Esophagus muscularis mucosa (tissue), 4 donors: ENCODE measurements at regions of chr18 and their contacts with region 1.

Region 1: DNA sequence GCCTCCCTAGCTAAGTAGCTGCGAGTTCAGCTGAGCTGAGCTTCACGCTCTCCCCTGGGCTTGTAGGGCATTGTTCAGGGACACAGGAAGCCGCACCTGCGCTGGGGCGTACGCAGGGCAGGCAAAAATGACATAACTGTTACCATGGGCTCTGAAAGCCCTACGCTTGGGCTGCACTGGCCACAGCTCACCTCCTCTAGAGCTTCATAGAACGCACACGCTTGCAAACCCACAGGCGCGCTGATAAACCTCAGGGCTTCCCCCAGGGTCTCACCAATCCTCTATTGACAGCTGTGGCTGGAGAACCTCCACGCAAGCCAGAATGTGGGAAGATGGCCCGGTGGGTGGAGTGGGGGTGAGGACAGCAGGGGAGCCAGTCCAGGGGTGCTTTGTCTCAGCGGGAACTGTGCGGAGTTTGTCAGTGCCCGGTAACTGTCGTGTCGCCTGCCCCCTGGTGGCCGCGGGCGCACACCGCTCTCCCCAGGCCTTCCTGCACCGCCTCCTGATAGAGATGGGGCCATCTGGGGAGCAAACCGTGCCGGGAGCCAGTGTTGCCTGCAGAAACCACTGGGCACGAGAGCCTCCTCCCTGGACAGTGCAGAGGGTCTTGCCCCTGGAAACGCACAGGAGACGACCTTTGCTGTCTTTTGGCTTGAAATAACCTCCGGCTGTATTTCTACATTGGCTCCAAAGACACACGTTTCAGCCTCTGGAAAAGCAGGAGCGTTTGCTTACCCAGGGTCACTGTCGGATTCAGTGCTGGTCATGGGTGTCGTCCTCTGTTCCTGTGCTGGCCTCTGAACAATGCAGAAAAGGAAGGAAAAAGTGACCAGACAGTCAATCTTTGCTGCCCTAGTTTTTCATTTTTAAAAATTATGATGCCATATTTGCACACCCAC is 17.0 kb upstream of the CIDEA start:
- DNase-seq: no peak
- H3K4me3 ChIP-seq: peak overlapping the region in 1 of 4 donors; percentile 22
- H3K27ac ChIP-seq: no peak overlapping the region
- H3K4me1 ChIP-seq: peaks cover 0 to 9% (median 7%) of the 10 kb centered on the region in 4 donors
- H3K27me3 ChIP-seq: peaks cover 0 to 7% (median 0%) of the 10 kb centered on the region in 4 donors
- CTCF ChIP-seq: peak; percentile 63 to 96 (median 84)
- EP300 ChIP-seq: no peak
- POLR2A ChIP-seq: no peak

Region 2: GRCh38 chr18:11654736-11655605 is 582.2 kb before region 1 on chr18:
- intact Hi-C with region 1: loop called (anchors 10 kb)
- DNase-seq: peak; percentile 87
- H3K4me3 ChIP-seq: peak overlapping the region in 1 of 4 donors; percentile 27
- H3K27ac ChIP-seq: no peak overlapping the region
- H3K4me1 ChIP-seq: peaks cover 0 to 8% (median 6%) of the 10 kb centered on the region in 4 donors
- H3K27me3 ChIP-seq: peaks cover 0 to 46% (median 0%) of the 10 kb centered on the region in 4 donors
- CTCF ChIP-seq: peak; percentile 51 to 70 (median 65)
- EP300 ChIP-seq: no peak
- POLR2A ChIP-seq: no peak

Region 3: DNA sequence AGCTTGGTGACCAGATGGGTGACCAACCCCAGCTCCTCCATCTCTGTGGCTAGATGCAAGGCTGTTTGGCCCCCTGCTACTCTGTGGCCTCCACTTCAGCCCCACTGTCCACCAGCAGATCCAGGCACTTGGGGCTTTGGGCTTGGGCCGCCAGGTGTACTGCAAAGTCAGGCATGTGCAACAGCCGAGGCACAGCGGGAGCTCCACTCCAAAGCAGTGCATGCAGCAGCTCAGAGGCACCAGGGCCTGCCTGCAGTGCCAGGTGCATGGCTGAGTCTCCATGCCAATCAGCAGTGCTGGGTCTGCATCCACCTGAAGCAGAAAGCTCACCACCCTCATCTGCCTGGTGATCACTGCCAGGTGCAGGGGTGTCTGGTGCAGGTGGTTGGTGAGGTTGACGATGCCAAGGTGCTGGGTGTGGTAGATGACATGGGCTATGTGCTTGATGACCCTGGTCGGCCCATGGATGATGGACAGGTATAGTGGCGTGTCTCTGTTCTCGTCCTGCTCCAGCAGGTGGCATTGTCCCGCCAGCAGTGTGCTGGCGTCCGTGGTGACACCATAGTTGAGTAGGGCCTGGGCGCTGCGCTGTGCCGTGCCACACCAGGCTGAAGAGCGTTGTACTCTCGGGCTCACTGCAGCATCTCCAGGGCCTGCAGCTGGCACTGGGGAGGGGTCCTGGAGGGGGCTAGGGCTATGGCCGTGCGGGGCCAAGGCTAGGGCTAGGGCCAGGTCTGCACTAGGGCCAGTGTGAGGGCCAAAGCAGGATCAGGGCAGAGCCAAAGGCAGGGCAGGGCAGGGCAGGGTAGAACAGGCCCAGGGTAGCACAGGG is 144.6 kb before region 1 on chr18:
- intact Hi-C with region 1: loop called (anchors 10 kb)
- DNase-seq: no peak
- H3K4me3 ChIP-seq: no peak overlapping the region
- H3K27ac ChIP-seq: no peak overlapping the region
- H3K4me1 ChIP-seq: no peaks in the 10 kb centered on the region
- H3K27me3 ChIP-seq: peaks cover 0 to 13% (median 0%) of the 10 kb centered on the region in 4 donors
- CTCF ChIP-seq: no peak
- EP300 ChIP-seq: no peak
- POLR2A ChIP-seq: no peak

Region 4: GRCh38 chr18:12287684-12288402 is 50.7 kb after region 1 on chr18:
- intact Hi-C with region 1: no loop called
- DNase-seq: no peak
- H3K4me3 ChIP-seq: peak overlapping the region; percentile 52 to 72 (median 56)
- H3K27ac ChIP-seq: peak overlapping the region; percentile 81 to 95 (median 86)
- H3K4me1 ChIP-seq: peaks cover 16 to 27% (median 24%) of the 10 kb centered on the region in 4 donors
- H3K27me3 ChIP-seq: peaks cover 0 to 4% (median 0%) of the 10 kb centered on the region in 4 donors
- CTCF ChIP-seq: no peak
- EP300 ChIP-seq: no peak
- POLR2A ChIP-seq: peak; percentile 29

Region 5: GRCh38 chr18:12811191-12811950 is 574.2 kb after region 1 on chr18:
- intact Hi-C with region 1: no loop called
- DNase-seq: no peak
- H3K4me3 ChIP-seq: no peak overlapping the region
- H3K27ac ChIP-seq: no peak overlapping the region
- H3K4me1 ChIP-seq: peaks cover 0 to 3% (median 0%) of the 10 kb centered on the region in 4 donors
- H3K27me3 ChIP-seq: no peaks in the 10 kb centered on the region
- CTCF ChIP-seq: no peak
- EP300 ChIP-seq: no peak
- POLR2A ChIP-seq: no peak